ENCODE measurements at regions of chr10 and their contacts with region 1.

Region 1: GRCh38 chr10:22988581-22989360 is 60.9 kb downstream of the ARMC3 start:
- DNase-seq: peak; percentile 73
- ATAC-seq: peak; percentile 55
- H3K4me3 ChIP-seq: peak overlapping the region; percentile 33; the same call in 1 of the 2 replicates
- H3K27ac ChIP-seq: no peak overlapping the region
- H3K4me1 ChIP-seq: no peaks in the 10 kb centered on the region
- H3K27me3 ChIP-seq: no peaks in the 10 kb centered on the region
- CTCF ChIP-seq: peak; percentile 90

Region 2: DNA sequence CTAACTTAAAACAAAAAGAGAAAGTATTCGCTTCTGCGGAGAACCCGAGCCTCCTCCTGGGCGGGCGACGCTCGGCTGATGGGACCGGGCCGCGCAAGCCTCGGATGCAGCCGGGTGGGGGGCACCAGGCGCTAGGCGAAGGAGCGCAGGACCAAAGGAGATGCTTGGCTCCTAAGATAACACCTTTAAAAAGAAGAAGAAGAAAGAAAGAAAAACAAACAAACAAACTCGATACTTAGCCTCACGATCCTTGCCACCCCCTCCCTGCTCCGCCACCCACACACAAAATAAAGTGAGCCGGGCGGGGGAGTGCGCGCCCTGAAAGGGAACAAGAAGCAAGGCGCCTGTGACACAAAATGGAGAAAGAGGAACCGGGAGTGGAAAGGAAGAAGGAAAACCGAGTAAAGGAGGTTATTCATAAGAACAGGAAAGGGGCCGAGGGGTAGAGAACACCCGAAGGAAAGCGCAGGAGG is 737.0 kb before region 1 on chr10:
- CTCF ChIA-PET with region 1: no interaction called
- POLR2A ChIA-PET with region 1: no interaction called
- intact Hi-C with region 1: loop called (anchors 10 kb)
- DNase-seq: peak; percentile 48
- ATAC-seq: peak; percentile 32
- H3K4me3 ChIP-seq: peak overlapping the region; percentile 68
- H3K27ac ChIP-seq: peak overlapping the region; percentile 89
- H3K4me1 ChIP-seq: peaks cover 31% of the 10 kb centered on the region
- H3K27me3 ChIP-seq: no peaks in the 10 kb centered on the region
- CTCF ChIP-seq: no peak

Region 3: DNA sequence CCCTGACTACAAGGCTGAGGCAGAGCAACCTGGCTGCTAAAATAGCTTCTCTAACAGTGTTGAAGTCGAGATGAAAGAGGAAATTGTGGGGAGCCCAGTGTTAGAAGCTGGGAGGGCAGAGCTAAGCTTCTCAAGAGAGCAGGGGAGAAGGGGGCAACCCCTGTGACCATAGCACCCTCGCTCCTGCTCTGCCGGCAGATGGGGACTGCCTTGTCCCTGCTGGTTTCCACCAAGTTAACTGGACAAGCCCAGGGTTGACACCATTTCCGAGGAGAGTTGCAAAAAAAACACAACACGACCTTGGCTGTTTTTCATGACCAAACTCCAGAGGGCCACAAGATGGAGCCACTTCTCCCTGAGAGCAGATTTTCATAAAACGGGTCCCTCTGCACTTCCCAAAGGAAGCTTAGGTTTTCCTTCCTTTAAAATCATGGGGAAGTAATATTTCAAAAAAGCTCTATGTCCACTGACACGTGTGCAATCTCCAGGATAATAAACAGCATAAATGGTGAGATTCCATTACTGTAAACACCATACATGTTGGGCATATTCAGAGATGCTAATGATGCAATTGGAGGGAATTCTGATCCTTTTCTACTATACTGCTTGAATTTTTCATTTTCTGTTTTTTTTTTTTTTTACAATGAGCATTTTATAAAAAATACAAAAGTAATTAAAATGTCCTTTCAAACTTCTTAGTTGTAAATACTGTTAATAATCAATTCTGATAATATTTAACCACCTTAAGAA is 414.8 kb before region 1 on chr10:
- CTCF ChIA-PET with region 1: interaction called, 6 read pairs
- POLR2A ChIA-PET with region 1: no interaction called
- intact Hi-C with region 1: loop called (anchors 1 kb)
- DNase-seq: peak; percentile 44
- ATAC-seq: no peak
- H3K4me3 ChIP-seq: no peak overlapping the region
- H3K27ac ChIP-seq: no peak overlapping the region
- H3K4me1 ChIP-seq: no peaks in the 10 kb centered on the region
- H3K27me3 ChIP-seq: no peaks in the 10 kb centered on the region
- CTCF ChIP-seq: peak; percentile 72

Region 4: GRCh38 chr10:22714479-22715289 is 274.1 kb before region 1 on chr10 and contains the start of gene PIP4K2A:
- CTCF ChIA-PET with region 1: no interaction called
- POLR2A ChIA-PET with region 1: no interaction called
- intact Hi-C with region 1: loop called (anchors 5 kb)
- DNase-seq: peak; percentile 72
- ATAC-seq: peak; percentile 81
- H3K4me3 ChIP-seq: peak within 1 kb of the TSS; percentile 92
- H3K27ac ChIP-seq: no peak within 1 kb of the TSS
- H3K4me1 ChIP-seq: peaks cover 13% of the 10 kb centered on the region
- H3K27me3 ChIP-seq: no peaks in the 10 kb centered on the region
- CTCF ChIP-seq: no peak
- total RNA-seq, gene PIP4K2A: 20.2 and 22.6 TPM in 2 replicates

Region 5: DNA sequence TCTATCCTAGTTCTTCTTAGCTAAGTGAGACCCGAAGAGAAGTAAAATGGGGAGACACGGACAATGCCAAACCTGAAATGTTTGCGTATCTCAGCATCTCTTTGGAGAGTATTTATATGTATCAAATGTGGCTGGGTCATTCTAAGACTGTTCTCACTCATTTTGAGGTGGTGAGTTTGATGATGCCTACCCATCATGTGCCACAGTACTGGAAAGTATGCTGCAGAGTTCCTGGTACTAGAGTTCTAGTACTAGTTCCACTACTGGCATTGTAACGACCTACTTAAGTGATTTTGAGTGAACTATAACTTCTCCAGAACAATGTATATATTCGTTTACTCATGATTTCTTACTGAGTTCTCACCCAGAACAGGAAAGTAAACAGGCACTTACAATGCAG is 19.1 kb before region 1 on chr10:
- CTCF ChIA-PET with region 1: no interaction called
- POLR2A ChIA-PET with region 1: no interaction called
- intact Hi-C with region 1: no loop called
- DNase-seq: no peak
- ATAC-seq: no peak
- H3K4me3 ChIP-seq: no peak overlapping the region
- H3K27ac ChIP-seq: no peak overlapping the region
- H3K4me1 ChIP-seq: no peaks in the 10 kb centered on the region
- H3K27me3 ChIP-seq: no peaks in the 10 kb centered on the region
- CTCF ChIP-seq: no peak

Region 6: GRCh38 chr10:23294638-23295247 is 306.0 kb after region 1 on chr10:
- CTCF ChIA-PET with region 1: no interaction called
- POLR2A ChIA-PET with region 1: no interaction called
- intact Hi-C with region 1: no loop called
- DNase-seq: peak; percentile 33
- ATAC-seq: no peak
- H3K4me3 ChIP-seq: no peak overlapping the region
- H3K27ac ChIP-seq: no peak overlapping the region
- H3K4me1 ChIP-seq: no peaks in the 10 kb centered on the region
- H3K27me3 ChIP-seq: peaks cover 17% of the 10 kb centered on the region
- CTCF ChIP-seq: peak; percentile 71